Activated CD4-positive, alpha-beta T cell treated with anti-CD3 and anti-CD28 coated beads, Interleukin-2, amount 10 ng/mL, durations not matched to agents 24 days and 14 days (primary cell): ENCODE measurements at regions of chr2 and their contacts with region 1.

Region 1: GRCh38 chr2:204950671-204951346 is 405.5 kb downstream of the PARD3B start:
- DNase-seq: no peak
- H3K4me3 Mint-ChIP-seq: no peak overlapping the region
- H3K27ac Mint-ChIP-seq: no peak overlapping the region
- H3K4me1 Mint-ChIP-seq: peaks cover 50% of the 10 kb centered on the region
- H3K27me3 Mint-ChIP-seq: no peaks in the 10 kb centered on the region

Region 2: DNA sequence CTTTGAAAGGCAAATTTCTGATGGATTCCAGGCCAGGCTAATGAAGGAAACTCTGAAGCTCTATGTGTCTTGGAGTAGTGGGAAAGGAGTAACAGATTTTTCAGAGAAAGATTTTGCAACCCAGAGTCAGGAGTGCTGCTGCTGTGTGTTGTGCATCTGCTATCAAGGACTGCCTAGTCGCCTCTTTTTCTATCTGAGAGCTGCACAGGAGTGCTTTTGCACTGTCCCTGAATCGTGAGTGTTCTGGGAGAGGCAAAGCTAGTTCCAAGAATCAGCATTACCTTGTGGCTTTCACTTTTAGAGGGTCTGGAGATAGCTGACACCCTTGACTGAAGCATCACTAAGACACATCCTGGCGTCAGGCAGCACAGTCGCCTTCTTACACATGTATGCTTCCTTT is 69.2 kb before region 1 on chr2:
- intact Hi-C with region 1: loop called (anchors 5 kb)
- DNase-seq: peak; percentile 86
- H3K4me3 Mint-ChIP-seq: peak overlapping the region; percentile 74
- H3K27ac Mint-ChIP-seq: peak overlapping the region; percentile 77
- H3K4me1 Mint-ChIP-seq: peaks cover 44% of the 10 kb centered on the region
- H3K27me3 Mint-ChIP-seq: no peaks in the 10 kb centered on the region

Region 3: GRCh38 chr2:204900910-204901309 is 49.9 kb before region 1 on chr2:
- intact Hi-C with region 1: loop called (anchors 2 kb)
- DNase-seq: no peak
- H3K4me3 Mint-ChIP-seq: no peak overlapping the region
- H3K27ac Mint-ChIP-seq: no peak overlapping the region
- H3K4me1 Mint-ChIP-seq: peaks cover 29% of the 10 kb centered on the region
- H3K27me3 Mint-ChIP-seq: no peaks in the 10 kb centered on the region

Region 4: DNA sequence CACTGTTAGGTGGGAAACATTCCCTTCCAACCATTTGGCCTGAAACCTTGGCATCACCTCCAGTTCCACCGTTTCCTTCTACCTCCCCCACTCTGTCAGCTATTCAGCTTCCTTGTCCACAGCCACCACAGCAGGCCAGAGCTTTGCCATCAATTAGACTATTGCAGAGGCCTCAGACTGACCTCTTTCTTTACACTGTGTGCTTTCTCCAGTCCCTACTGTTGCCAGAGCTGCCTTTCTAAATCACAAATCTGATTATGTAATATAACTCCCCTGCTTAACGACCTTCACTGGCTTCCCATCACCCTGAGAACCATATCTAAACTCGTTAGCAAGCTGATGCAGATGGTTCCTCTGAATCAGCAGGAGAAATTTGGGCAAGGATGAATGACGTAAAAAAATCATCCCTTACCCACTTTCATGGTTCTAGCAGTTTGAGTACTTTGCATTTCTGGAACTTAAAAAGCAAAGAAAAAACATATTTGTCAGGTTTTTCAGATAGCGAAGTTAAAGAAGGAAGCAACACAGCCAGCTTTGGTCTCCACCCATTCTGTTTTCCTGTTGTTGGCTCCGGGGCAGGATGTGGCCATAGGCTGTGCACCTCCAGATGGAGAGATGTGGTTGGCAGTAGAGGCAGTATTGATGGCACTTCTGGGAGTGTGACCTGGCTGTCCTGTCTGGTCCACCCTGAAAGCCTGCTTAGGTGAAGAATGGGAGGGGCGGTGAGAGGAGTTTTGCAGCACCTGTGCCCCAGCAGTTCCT is 16.6 kb after region 1 on chr2:
- intact Hi-C with region 1: loop called (anchors 1 kb)
- DNase-seq: peak; percentile 91
- H3K4me3 Mint-ChIP-seq: peak overlapping the region; percentile 57
- H3K27ac Mint-ChIP-seq: peak overlapping the region; percentile 88
- H3K4me1 Mint-ChIP-seq: peaks cover 47% of the 10 kb centered on the region
- H3K27me3 Mint-ChIP-seq: no peaks in the 10 kb centered on the region

Region 5: DNA sequence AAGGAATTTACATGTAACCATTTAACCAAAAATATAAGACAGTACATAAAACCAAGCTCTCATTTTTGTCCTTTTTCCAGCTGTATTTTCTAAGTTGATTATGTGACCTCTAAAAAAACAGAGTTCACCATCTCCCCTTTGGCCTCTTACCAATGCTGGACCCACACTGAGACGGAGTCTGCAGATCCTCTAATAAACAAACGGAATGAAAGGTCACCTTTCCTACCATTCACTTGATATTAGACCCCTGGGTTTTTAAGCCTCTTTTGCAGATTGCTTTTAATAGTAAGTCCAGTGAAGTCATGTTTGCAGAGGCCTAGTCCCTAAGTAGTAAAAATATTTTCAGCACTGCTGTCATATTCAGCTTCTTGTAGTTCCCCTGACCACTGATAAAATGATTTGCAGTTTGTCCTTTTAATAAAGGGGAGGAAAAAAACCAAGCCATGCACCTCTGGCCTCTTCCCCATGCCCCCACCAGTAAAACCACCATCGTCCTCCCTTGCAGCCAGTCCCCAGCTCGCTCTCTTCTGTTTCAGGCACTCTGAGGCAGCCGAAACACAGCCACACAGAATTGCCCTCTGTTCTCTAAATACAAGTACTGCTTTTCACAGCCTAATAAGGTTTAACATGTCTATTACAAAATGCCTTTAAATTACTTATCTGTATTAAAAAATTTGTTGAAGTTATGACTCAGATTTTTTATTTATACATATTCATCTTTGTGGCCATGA is 22.0 kb after region 1 on chr2:
- intact Hi-C with region 1: loop called (anchors 1 kb)
- DNase-seq: no peak
- H3K4me3 Mint-ChIP-seq: no peak overlapping the region
- H3K27ac Mint-ChIP-seq: peak overlapping the region; percentile 62
- H3K4me1 Mint-ChIP-seq: peaks cover 34% of the 10 kb centered on the region
- H3K27me3 Mint-ChIP-seq: no peaks in the 10 kb centered on the region

Region 6: DNA sequence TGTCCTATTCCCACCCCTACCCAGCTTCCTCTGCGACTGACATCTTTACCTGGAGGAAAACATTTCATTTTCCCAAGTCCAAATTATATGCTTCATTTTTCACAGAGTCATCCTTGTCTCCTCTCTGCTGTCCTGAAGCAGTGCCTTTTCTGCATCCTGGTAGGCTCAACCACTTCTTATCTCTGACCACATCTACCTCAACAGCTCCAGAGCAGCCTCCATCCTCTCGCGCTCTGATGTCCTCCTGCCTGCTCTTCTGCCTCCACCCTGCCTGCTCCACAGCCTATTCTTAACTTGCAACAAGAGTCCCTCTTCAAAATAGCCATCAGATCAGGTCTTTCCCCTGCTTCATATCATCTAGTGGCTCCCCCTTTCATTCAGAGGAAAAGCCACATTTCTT is 51.6 kb after region 1 on chr2:
- intact Hi-C with region 1: loop called (anchors 2 kb)
- DNase-seq: peak; percentile 79
- H3K4me3 Mint-ChIP-seq: peak overlapping the region; percentile 50
- H3K27ac Mint-ChIP-seq: peak overlapping the region; percentile 73
- H3K4me1 Mint-ChIP-seq: peaks cover 34% of the 10 kb centered on the region
- H3K27me3 Mint-ChIP-seq: no peaks in the 10 kb centered on the region

Region 7: GRCh38 chr2:205077159-205077558 is 126.3 kb after region 1 on chr2:
- intact Hi-C with region 1: loop called (anchors 5 kb)
- DNase-seq: peak; percentile 79
- H3K4me3 Mint-ChIP-seq: peak overlapping the region; percentile 66
- H3K27ac Mint-ChIP-seq: peak overlapping the region; percentile 62
- H3K4me1 Mint-ChIP-seq: peaks cover 38% of the 10 kb centered on the region
- H3K27me3 Mint-ChIP-seq: no peaks in the 10 kb centered on the region

Region 8: DNA sequence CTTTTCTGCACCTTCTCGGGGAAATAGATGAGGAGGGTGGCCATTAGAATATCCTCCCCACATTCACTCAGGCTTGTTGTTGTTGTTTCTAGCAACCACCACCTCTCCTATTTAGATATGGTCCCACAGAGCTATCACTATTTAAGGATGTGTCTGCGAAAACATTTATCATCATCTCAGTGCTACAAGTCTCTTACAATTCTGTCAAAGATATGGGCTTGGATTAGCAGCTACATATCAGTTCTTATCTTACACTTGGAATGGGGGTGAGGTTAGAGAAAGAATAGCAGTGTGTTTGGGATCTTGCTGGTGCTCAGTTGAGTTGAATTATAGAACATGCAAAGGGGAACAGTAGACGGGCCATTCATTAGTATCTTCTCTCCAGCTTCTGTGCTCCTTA is 140.6 kb after region 1 on chr2:
- intact Hi-C with region 1: no loop called
- DNase-seq: no peak
- H3K4me3 Mint-ChIP-seq: no peak overlapping the region
- H3K27ac Mint-ChIP-seq: no peak overlapping the region
- H3K4me1 Mint-ChIP-seq: peaks cover 9% of the 10 kb centered on the region
- H3K27me3 Mint-ChIP-seq: no peaks in the 10 kb centered on the region

Region 9: GRCh38 chr2:205175831-205176230 is 225.0 kb after region 1 on chr2:
- intact Hi-C with region 1: no loop called
- DNase-seq: peak; percentile 43
- H3K4me3 Mint-ChIP-seq: no peak overlapping the region
- H3K27ac Mint-ChIP-seq: no peak overlapping the region
- H3K4me1 Mint-ChIP-seq: no peaks in the 10 kb centered on the region
- H3K27me3 Mint-ChIP-seq: peaks cover 7% of the 10 kb centered on the region